GM12878 (cell line): ENCODE measurements at regions of chr7 and their contacts with region 1.

Region 1: DNA sequence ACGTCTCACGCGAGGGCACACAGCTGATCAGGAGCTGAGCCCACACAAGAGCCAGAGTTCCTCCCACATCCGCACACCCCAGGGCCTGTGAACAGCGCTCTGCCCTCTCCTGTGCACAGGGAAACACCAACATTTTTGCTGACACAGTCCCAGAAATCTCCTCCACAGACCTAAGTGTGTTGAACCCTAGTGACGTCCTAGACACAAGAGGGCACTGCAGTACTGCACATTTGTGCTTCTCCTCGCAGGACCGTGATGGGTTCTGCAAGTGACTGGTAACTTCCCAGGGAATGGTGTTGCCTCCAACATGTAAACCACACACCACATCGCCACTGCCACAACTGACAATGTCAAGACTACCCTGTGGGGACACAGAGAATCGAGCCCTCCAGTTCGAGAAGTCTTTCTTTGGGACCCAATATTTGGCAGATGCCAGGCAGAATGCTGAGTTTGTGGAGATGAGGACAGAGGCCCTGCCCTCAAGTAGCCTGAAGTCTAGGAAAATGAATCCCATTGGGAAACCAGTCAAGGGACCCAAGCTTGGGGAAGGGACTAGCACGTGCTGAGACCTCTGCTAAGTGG is 170.3 kb downstream of the PAXIP1 start:
- DNase-seq: no peak
- ATAC-seq: peak; percentile 86
- H3K4me3 ChIP-seq: no peak overlapping the region
- H3K27ac ChIP-seq: no peak overlapping the region
- H3K4me1 ChIP-seq: peaks cover 4% of the 10 kb centered on the region
- H3K27me3 ChIP-seq: no peaks in the 10 kb centered on the region; a peak in 1 of 4 replicates
- CTCF ChIP-seq: peak; percentile 32 to 65 (median 38); a peak in 4 of 6 replicates
- EP300 ChIP-seq: no peak
- POLR2A ChIP-seq: no peak
- RAD21 ChIP-seq: peak; percentile 52

Region 2: GRCh38 chr7:154517768-154518167 is 314.9 kb before region 1 on chr7:
- CTCF ChIA-PET with region 1: no interaction called
- POLR2A ChIA-PET with region 1: no interaction called
- RAD21 ChIA-PET with region 1: no interaction called
- SMC1A ChIA-PET with region 1: no interaction called
- in situ Hi-C with region 1: no loop called
- intact Hi-C with region 1: no loop called
- DNase-seq: no peak
- ATAC-seq: no peak
- H3K4me3 ChIP-seq: no peak overlapping the region
- H3K27ac ChIP-seq: no peak overlapping the region
- H3K4me1 ChIP-seq: no peaks in the 10 kb centered on the region
- H3K27me3 ChIP-seq: no peaks in the 10 kb centered on the region
- CTCF ChIP-seq: no peak
- EP300 ChIP-seq: no peak
- POLR2A ChIP-seq: no peak
- RAD21 ChIP-seq: no peak

Region 3: GRCh38 chr7:154860621-154861375 is 28.1 kb after region 1 on chr7:
- CTCF ChIA-PET with region 1: interaction called, 3 read pairs
- POLR2A ChIA-PET with region 1: no interaction called
- RAD21 ChIA-PET with region 1: interaction called, 3 read pairs
- SMC1A ChIA-PET with region 1: interaction called, 13 read pairs
- in situ Hi-C with region 1: no loop called
- intact Hi-C with region 1: loop called (anchors 1 kb)
- DNase-seq: no peak
- ATAC-seq: no peak
- H3K4me3 ChIP-seq: no peak overlapping the region
- H3K27ac ChIP-seq: no peak overlapping the region
- H3K4me1 ChIP-seq: no peaks in the 10 kb centered on the region
- H3K27me3 ChIP-seq: no peaks in the 10 kb centered on the region
- CTCF ChIP-seq: no peak
- EP300 ChIP-seq: no peak
- POLR2A ChIP-seq: no peak
- RAD21 ChIP-seq: no peak

Region 4: DNA sequence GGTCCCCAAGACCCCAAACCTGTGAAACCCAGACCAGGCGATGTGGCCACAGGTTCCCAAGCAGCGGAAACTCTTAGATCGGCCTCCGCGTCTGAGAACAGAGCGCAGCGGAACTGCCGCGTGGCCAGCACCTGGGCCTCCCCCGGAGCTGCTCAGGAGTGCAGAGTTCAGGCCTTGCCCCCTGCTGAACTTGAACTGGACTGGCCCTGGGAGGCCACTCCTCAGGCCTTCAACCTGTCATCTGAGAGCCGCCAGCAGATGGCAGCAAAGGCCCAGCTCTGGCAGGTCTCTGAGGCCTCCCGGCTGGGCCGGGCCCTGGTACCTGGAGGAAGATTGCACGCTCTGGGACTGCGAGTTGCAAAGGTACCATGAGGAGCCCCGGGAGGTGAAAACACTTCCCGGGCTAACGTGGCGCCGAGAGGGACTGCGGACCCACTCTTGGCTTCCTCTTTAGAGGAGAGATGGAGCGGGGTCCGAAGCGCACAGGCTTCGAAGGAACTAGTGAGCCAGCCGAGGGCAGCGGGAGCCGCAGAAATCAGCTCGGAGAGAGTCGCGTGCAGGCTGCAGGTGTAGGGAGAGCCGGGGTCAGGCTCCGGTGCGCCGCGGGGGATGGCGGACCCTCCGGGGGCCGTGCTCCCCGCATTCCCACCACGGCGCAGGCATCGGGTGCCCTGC is 81.1 kb after region 1 on chr7:
- CTCF ChIA-PET with region 1: interaction called, 3 read pairs
- POLR2A ChIA-PET with region 1: no interaction called
- RAD21 ChIA-PET with region 1: interaction called, 3 read pairs
- SMC1A ChIA-PET with region 1: interaction called, 4 read pairs
- in situ Hi-C with region 1: no loop called
- intact Hi-C with region 1: loop called (anchors 2 kb)
- DNase-seq: no peak
- ATAC-seq: peak; percentile 100
- H3K4me3 ChIP-seq: no peak overlapping the region
- H3K27ac ChIP-seq: no peak overlapping the region
- H3K4me1 ChIP-seq: no peaks in the 10 kb centered on the region
- H3K27me3 ChIP-seq: no peaks in the 10 kb centered on the region; a peak in 1 of 4 replicates
- CTCF ChIP-seq: peak; percentile 76 to 92 (median 88)
- EP300 ChIP-seq: no peak
- POLR2A ChIP-seq: no peak
- RAD21 ChIP-seq: peak; percentile 84

Region 5: GRCh38 chr7:154990964-154991540 is 158.4 kb after region 1 on chr7:
- CTCF ChIA-PET with region 1: no interaction called
- POLR2A ChIA-PET with region 1: no interaction called
- RAD21 ChIA-PET with region 1: no interaction called
- SMC1A ChIA-PET with region 1: no interaction called
- in situ Hi-C with region 1: no loop called
- intact Hi-C with region 1: no loop called
- DNase-seq: no peak
- ATAC-seq: no peak
- H3K4me3 ChIP-seq: no peak overlapping the region
- H3K27ac ChIP-seq: no peak overlapping the region
- H3K4me1 ChIP-seq: no peaks in the 10 kb centered on the region
- H3K27me3 ChIP-seq: no peaks in the 10 kb centered on the region
- CTCF ChIP-seq: no peak
- EP300 ChIP-seq: no peak
- POLR2A ChIP-seq: no peak
- RAD21 ChIP-seq: no peak

Region 6: DNA sequence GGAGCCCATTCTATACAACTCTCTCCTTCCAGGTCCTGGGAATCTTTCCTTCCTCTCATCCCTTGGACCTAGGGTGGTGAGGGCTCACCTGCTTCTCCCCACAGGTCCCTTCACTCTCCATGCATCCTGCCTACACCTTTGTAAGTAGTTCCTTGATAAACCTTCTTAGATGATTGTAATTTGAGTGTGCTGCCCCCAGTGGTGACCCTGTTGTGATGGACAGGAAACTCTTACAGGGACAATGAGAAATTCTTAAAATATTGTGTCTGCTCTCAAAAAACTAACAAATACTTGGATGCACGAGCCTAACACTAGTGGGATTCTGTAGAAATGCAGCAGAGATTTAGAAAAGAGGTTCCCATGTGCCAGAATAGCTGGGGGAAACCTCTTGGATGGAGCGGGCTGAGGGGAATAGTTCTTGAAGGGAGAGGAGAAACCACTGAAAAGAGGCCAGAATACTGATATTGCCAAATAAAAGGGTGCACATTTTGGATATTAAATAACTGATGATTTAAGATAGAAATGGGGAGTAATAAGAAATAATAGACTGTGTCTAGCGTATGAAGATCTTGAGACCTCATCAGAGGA is 177.0 kb after region 1 on chr7:
- CTCF ChIA-PET with region 1: interaction called, 3 read pairs
- POLR2A ChIA-PET with region 1: no interaction called
- RAD21 ChIA-PET with region 1: no interaction called
- SMC1A ChIA-PET with region 1: no interaction called
- in situ Hi-C with region 1: no loop called
- intact Hi-C with region 1: loop called (anchors 2 kb)
- DNase-seq: no peak
- ATAC-seq: peak; percentile 77
- H3K4me3 ChIP-seq: no peak overlapping the region
- H3K27ac ChIP-seq: no peak overlapping the region
- H3K4me1 ChIP-seq: no peaks in the 10 kb centered on the region
- H3K27me3 ChIP-seq: no peaks in the 10 kb centered on the region
- CTCF ChIP-seq: peak; percentile 34 to 56 (median 50); a peak in 5 of 6 replicates
- EP300 ChIP-seq: no peak
- POLR2A ChIP-seq: no peak
- RAD21 ChIP-seq: peak; percentile 33; the same call in 1 of the 2 replicates

Region 7: GRCh38 chr7:155141562-155141961 is 308.9 kb after region 1 on chr7:
- CTCF ChIA-PET with region 1: no interaction called
- POLR2A ChIA-PET with region 1: no interaction called
- RAD21 ChIA-PET with region 1: no interaction called
- SMC1A ChIA-PET with region 1: no interaction called
- in situ Hi-C with region 1: no loop called
- intact Hi-C with region 1: no loop called
- DNase-seq: no peak
- ATAC-seq: no peak
- H3K4me3 ChIP-seq: no peak overlapping the region
- H3K27ac ChIP-seq: no peak overlapping the region
- H3K4me1 ChIP-seq: no peaks in the 10 kb centered on the region
- H3K27me3 ChIP-seq: no peaks in the 10 kb centered on the region; a peak in 1 of 4 replicates
- CTCF ChIP-seq: no peak
- EP300 ChIP-seq: no peak
- POLR2A ChIP-seq: no peak
- RAD21 ChIP-seq: no peak

Region 8: GRCh38 chr7:155344600-155345433 is 512.2 kb after region 1 on chr7:
- CTCF ChIA-PET with region 1: interaction called, 6 read pairs
- POLR2A ChIA-PET with region 1: no interaction called
- RAD21 ChIA-PET with region 1: no interaction called
- SMC1A ChIA-PET with region 1: no interaction called
- in situ Hi-C with region 1: no loop called
- intact Hi-C with region 1: loop called (anchors 2 kb)
- DNase-seq: no peak
- ATAC-seq: peak; percentile 98
- H3K4me3 ChIP-seq: peak overlapping the region; percentile 63; the same call in 1 of the 2 replicates
- H3K27ac ChIP-seq: no peak overlapping the region
- H3K4me1 ChIP-seq: peaks cover 5% of the 10 kb centered on the region; the same call in 1 of the 2 replicates
- H3K27me3 ChIP-seq: no peaks in the 10 kb centered on the region
- CTCF ChIP-seq: peak; percentile 71 to 73 (median 72); a peak in 5 of 6 replicates
- EP300 ChIP-seq: no peak
- POLR2A ChIP-seq: peak; percentile 29; the same call in 1 of the 2 replicates
- RAD21 ChIP-seq: peak; percentile 90